Caco-2 (cell line): ENCODE measurements at regions of chr12 and their contacts with region 1.

Region 1: DNA sequence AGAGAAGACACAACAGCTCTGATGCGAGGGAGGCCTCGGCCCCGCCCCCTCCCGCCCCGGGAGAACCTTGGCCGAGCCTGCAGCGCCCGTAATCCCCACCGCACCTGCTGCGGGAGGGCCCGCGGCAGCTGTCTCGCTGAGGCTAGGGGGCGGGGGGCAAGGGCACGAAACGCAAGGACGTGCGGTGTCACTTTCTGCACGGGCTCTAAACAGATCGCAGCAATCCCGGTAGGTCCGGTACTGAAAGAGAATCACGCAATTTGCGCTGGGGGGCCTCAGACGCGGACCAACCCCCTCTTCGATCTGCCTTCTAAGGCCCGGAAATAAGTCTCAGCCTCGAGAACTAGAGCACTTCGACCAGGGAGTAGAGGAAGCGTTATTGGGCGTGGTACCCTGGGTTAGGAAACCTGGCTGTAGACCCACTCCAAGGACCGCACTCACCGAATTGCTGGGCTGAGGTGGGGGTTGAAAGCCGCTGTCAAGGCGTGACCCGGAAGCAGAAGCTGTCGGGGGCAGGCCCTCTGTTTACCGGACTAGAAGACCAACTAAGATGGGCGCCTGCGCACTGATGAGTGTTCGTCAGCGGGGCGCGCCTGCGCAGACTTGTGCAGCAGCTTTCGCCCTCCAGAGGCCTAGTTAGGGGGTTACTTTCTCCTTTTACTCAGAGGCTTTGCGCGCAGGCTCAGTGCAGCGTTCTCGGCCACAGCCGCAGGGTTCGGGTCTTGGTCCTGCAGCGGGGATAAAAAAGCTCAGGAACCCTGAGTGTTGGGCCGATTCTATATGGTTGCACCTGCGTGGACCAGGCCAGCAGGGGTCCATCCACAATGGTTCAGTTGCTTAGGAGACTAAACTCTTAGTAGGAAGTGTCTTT is at the start of gene ASB8:
- DNase-seq: peak; percentile 99
- H3K4me3 ChIP-seq: peak within 1 kb of the TSS; percentile 75
- H3K4me3 Mint-ChIP-seq: peak within 1 kb of the TSS; percentile 97
- H3K27ac Mint-ChIP-seq: peak within 1 kb of the TSS; percentile 94
- H3K4me1 ChIP-seq: peaks cover 6% of the 10 kb centered on the region
- H3K4me1 Mint-ChIP-seq: no peaks in the 10 kb centered on the region
- H3K27me3 ChIP-seq: no peaks in the 10 kb centered on the region
- H3K27me3 Mint-ChIP-seq: no peaks in the 10 kb centered on the region
- CTCF ChIP-seq: peak; percentile 30 to 62
- total RNA-seq, gene ASB8: 27.8 and 30.6 TPM in 2 replicates

Region 2: GRCh38 chr12:47850153-47851084 is 306.8 kb before region 1 on chr12:
- CTCF ChIA-PET with region 1: no interaction called
- POLR2A ChIA-PET with region 1: no interaction called
- intact Hi-C with region 1: no loop called
- DNase-seq: peak; percentile 73 to 75
- H3K4me3 ChIP-seq: no peak overlapping the region
- H3K4me3 Mint-ChIP-seq: no peak overlapping the region
- H3K27ac Mint-ChIP-seq: peak overlapping the region; percentile 91
- H3K4me1 ChIP-seq: peaks cover 18% of the 10 kb centered on the region
- H3K4me1 Mint-ChIP-seq: peaks cover 29% of the 10 kb centered on the region
- H3K27me3 ChIP-seq: no peaks in the 10 kb centered on the region
- H3K27me3 Mint-ChIP-seq: no peaks in the 10 kb centered on the region
- CTCF ChIP-seq: no peak

Region 3: GRCh38 chr12:47954058-47954457 is 203.2 kb before region 1 on chr12:
- CTCF ChIA-PET with region 1: no interaction called
- POLR2A ChIA-PET with region 1: no interaction called
- intact Hi-C with region 1: no loop called
- DNase-seq: no peak
- H3K4me3 ChIP-seq: no peak overlapping the region
- H3K4me3 Mint-ChIP-seq: no peak overlapping the region
- H3K27ac Mint-ChIP-seq: peak overlapping the region; percentile 52
- H3K4me1 ChIP-seq: peaks cover 31% of the 10 kb centered on the region
- H3K4me1 Mint-ChIP-seq: peaks cover 35% of the 10 kb centered on the region
- H3K27me3 ChIP-seq: no peaks in the 10 kb centered on the region
- H3K27me3 Mint-ChIP-seq: no peaks in the 10 kb centered on the region
- CTCF ChIP-seq: no peak

Region 4: GRCh38 chr12:48105862-48106680 is 51.2 kb before region 1 on chr12 and contains the start of gene SENP1:
- CTCF ChIA-PET with region 1: interaction called, 4 read pairs
- POLR2A ChIA-PET with region 1: interaction called, 17 read pairs
- intact Hi-C with region 1: loop called (anchors 1 kb)
- DNase-seq: peak; percentile 92 to 94
- H3K4me3 ChIP-seq: peak within 1 kb of the TSS; percentile 83
- H3K4me3 Mint-ChIP-seq: peak within 1 kb of the TSS; percentile 99
- H3K27ac Mint-ChIP-seq: peak within 1 kb of the TSS; percentile 97
- H3K4me1 ChIP-seq: peaks cover 18% of the 10 kb centered on the region
- H3K4me1 Mint-ChIP-seq: peaks cover 30% of the 10 kb centered on the region
- H3K27me3 ChIP-seq: no peaks in the 10 kb centered on the region
- H3K27me3 Mint-ChIP-seq: no peaks in the 10 kb centered on the region
- CTCF ChIP-seq: peak in 1 of 2 experiments; percentile 31
- total RNA-seq, gene SENP1: 40.4 and 42.1 TPM in 2 replicates

Region 5: DNA sequence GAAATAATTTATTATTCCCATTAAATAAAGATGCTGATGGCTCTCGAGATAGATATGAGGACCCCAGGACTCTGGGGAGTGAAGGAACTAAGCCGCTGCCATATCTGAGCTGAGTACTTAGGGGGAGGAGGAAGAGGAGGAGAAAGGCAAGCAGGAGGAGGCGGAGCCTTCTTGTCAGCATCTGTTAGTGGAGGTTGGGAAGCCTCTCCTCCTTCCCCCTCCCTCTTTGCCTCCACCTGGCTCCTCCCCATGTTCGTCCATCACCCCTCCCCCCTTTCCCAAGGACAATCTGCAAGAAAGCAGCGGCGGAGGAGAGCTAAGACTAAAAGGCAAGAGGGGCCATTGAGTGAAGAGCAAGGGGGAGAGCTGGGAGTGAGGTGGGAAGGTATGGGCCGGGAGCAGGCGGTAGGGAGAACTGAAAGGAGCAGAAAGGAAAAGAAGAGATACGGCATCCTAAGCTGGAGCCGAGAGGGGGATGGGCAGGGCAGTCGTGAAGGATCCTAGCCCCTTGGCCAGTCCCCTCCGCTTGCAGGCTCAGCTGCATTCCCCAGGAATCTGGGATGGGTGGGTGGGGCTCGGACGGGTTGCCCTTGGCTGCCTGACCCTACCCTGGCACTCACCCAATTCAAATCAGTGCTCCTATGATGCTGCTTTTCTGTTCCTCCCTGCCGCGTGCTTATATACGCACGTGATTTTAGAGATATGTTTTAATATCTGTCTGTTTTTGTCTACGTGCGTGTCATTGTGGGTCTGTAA is 38.0 kb before region 1 on chr12 and contains the start of gene PFKM:
- CTCF ChIA-PET with region 1: interaction called, 13 read pairs
- POLR2A ChIA-PET with region 1: interaction called, 12 read pairs
- intact Hi-C with region 1: loop called (anchors 1 kb)
- DNase-seq: peak; percentile 92 to 95
- H3K4me3 ChIP-seq: peak within 1 kb of the TSS; percentile 80
- H3K4me3 Mint-ChIP-seq: peak within 1 kb of the TSS; percentile 92
- H3K27ac Mint-ChIP-seq: peak within 1 kb of the TSS; percentile 70
- H3K4me1 ChIP-seq: peaks cover 20% of the 10 kb centered on the region
- H3K4me1 Mint-ChIP-seq: peaks cover 18% of the 10 kb centered on the region
- H3K27me3 ChIP-seq: no peaks in the 10 kb centered on the region
- H3K27me3 Mint-ChIP-seq: no peaks in the 10 kb centered on the region
- CTCF ChIP-seq: no peak
- total RNA-seq, gene PFKM: 96.8 and 108 TPM in 2 replicates

Region 6: GRCh38 chr12:48183091-48183875 is 26.0 kb after region 1 on chr12 and contains the start of gene CCDC184:
- CTCF ChIA-PET with region 1: interaction called, 4 read pairs
- POLR2A ChIA-PET with region 1: no interaction called
- intact Hi-C with region 1: loop called (anchors 2 kb)
- DNase-seq: peak; percentile 74 to 82
- H3K4me3 ChIP-seq: peak within 1 kb of the TSS; percentile 63
- H3K4me3 Mint-ChIP-seq: peak within 1 kb of the TSS; percentile 77
- H3K27ac Mint-ChIP-seq: peak within 1 kb of the TSS; percentile 45
- H3K4me1 ChIP-seq: peaks cover 6% of the 10 kb centered on the region
- H3K4me1 Mint-ChIP-seq: peaks cover 15% of the 10 kb centered on the region
- H3K27me3 ChIP-seq: no peaks in the 10 kb centered on the region
- H3K27me3 Mint-ChIP-seq: peaks cover 13% of the 10 kb centered on the region
- CTCF ChIP-seq: peak in 1 of 2 experiments; percentile 56
- total RNA-seq, gene CCDC184: 1.00 and 1.0 TPM in 2 replicates